Astrocyte of the cerebellum (primary cell): ENCODE measurements at regions of chr9 and their contacts with region 1.

Region 1: GRCh38 chr9:89602978-89603766 is 1.6 kb upstream of the GADD45G start:
- DNase-seq: peak; percentile 69
- H3K4me3 ChIP-seq: peak overlapping the region; percentile 47
- CTCF ChIP-seq: peak; percentile 93

Region 2: DNA sequence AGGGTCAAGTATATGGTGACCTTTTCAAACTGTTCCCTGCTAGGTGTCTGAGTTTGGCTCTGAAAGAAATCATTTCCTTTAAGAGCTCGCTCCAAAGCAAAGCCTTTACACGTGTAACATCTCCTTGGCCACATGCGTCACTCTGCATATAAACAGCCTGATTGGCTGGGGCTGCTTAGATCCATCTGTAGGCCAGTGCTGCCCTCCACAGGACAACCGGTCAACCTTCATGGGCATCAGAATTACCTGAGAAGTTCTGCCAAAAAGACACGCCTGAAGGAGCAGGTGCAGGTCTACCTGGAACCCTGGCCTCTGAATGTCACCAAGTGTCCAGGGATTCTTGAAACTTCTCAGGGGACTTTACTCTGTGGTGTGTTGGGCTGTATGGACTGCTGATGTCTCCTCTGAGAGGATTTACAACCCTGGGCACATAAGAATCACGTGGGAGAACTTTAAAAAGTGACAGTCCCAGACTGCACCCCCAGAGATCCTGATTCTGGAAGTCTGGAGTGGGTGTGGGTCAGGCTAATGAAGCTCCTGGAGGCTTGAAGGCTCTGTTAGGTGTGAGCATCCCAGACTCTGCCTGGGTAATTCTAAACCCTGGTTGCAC is 499.2 kb after region 1 on chr9:
- in situ Hi-C with region 1: loop called (anchors 5 kb)
- DNase-seq: peak; percentile 78
- H3K4me3 ChIP-seq: no peak overlapping the region
- CTCF ChIP-seq: peak; percentile 76